ENCODE measurements at regions of chr3 and their contacts with region 1.

Region 1: DNA sequence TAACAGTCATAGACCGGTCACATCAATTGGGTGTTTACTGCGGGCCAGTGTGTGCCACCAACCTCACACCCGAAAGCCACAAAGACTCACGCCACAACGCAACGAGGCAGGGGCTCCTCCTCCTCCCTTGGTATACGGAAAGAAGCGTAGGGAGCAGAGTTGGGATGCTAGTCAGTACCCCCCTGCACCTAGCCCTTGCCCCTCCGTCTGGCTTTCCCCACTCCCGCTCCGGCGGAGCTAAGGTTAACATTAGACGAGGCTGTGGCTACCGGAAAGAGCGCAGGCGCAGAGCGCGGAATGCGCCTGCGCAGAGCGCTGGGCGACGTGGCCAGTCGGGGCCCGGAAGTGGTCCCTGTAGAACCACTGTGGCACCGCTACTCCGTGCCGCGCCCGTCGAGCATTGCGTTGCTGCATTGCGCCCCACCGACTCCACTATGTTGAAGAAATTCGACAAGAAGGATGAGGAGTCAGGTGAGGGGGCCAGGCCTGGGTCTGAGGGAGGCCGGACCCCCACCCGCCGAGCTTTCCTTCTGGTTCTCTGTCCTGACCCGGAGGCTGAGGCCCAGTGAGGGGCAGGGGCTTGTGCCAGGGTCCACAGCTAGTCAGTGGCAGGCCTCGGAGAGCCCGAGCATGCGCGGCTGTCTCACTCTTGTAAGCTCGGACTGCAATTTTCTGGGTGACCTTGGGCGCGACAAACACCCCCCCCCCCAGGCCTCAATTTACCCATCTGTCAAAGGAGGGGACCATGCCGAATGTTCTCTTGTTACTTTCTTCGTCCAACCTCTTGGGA is at the start of gene COPG1:
- DNase-seq: peak; percentile 72
- ATAC-seq: peak; percentile 92
- H3K4me3 ChIP-seq: peak within 1 kb of the TSS; percentile 84
- H3K27ac ChIP-seq: peak within 1 kb of the TSS; percentile 94
- H3K4me1 ChIP-seq: peaks cover 8% of the 10 kb centered on the region
- H3K27me3 ChIP-seq: no peaks in the 10 kb centered on the region
- CTCF ChIP-seq: no peak
- EP300 ChIP-seq: no peak
- POLR2A ChIP-seq: peak; percentile 98
- RAD21 ChIP-seq: no peak
- polyA plus RNA-seq, gene COPG1: 54.8 to 102 TPM

Region 2: DNA sequence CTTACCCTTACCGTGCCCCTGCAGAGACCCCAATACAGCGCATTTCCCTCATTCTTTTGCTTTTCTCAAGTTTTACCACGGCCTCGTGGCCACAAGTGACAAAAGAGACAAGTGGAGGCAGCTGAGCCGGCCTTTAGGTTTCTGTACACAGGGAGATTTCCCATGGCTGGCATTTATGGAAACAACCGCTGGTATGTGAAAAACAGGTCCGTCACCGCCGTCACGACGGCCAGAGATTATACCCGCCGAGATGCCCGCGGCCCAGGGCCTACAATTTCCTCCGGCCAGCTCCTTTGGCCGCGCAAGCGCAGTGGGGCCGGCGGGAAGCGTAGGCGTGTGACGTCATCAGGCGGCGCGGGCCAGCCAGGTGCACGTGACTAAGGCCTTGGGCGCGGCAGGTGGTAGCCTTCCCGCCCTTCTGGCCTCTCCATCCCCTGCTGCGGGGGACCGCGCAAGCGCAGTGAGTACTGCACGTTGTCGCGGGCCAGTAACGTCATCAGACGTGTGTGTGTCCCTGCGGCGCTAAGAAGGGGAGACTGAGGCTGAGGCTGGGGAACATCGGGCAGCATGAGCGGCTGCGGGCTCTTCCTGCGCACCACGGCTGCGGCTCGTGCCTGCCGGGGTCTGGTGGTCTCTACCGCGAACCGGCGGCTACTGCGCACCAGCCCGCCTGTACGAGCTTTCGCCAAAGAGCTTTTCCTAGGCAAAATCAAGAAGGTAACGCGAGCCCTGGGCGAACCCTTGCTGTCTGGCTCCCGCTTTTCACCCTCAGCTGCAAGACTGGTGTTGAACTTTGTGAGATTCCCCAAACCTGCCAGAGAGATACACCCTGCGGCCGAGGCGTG is 370.1 kb before region 1 on chr3 and contains the start of gene ACAD9:
- CTCF ChIA-PET with region 1: interaction called, 6 read pairs
- POLR2A ChIA-PET with region 1: interaction called, 3 read pairs
- RAD21 ChIA-PET with region 1: interaction called, 3 read pairs
- SMC1A ChIA-PET with region 1: no interaction called
- in situ Hi-C with region 1: no loop called
- intact Hi-C with region 1: loop called (anchors 5 kb)
- DNase-seq: peak; percentile 97
- ATAC-seq: peak; percentile 92
- H3K4me3 ChIP-seq: peak within 1 kb of the TSS; percentile 92
- H3K27ac ChIP-seq: peak within 1 kb of the TSS; percentile 85
- H3K4me1 ChIP-seq: peaks cover 18% of the 10 kb centered on the region
- H3K27me3 ChIP-seq: no peaks in the 10 kb centered on the region
- CTCF ChIP-seq: no peak
- EP300 ChIP-seq: peak; percentile 48 to 53; a peak in 1 of 4 replicates
- POLR2A ChIP-seq: peak; percentile 96
- RAD21 ChIP-seq: no peak
- polyA plus RNA-seq, gene ACAD9: 12.7 to 21.5 TPM

Region 3: GRCh38 chr3:129052675-129053074 is 196.8 kb before region 1 on chr3:
- CTCF ChIA-PET with region 1: interaction called, 220 read pairs
- POLR2A ChIA-PET with region 1: interaction called, 8 read pairs
- RAD21 ChIA-PET with region 1: interaction called, 88 read pairs
- SMC1A ChIA-PET with region 1: interaction called, 118 read pairs
- in situ Hi-C with region 1: loop called (anchors 5 kb)
- intact Hi-C with region 1: loop called (anchors 1 kb)
- DNase-seq: no peak
- ATAC-seq: no peak
- H3K4me3 ChIP-seq: no peak overlapping the region
- H3K27ac ChIP-seq: no peak overlapping the region
- H3K4me1 ChIP-seq: no peaks in the 10 kb centered on the region
- H3K27me3 ChIP-seq: no peaks in the 10 kb centered on the region; a peak in 1 of 4 replicates
- CTCF ChIP-seq: no peak
- EP300 ChIP-seq: no peak
- POLR2A ChIP-seq: no peak
- RAD21 ChIP-seq: no peak

Region 4: GRCh38 chr3:129176051-129176450 is 73.4 kb before region 1 on chr3:
- CTCF ChIA-PET with region 1: interaction called, 6 read pairs
- POLR2A ChIA-PET with region 1: interaction called, 5 read pairs
- RAD21 ChIA-PET with region 1: interaction called, 3 read pairs
- SMC1A ChIA-PET with region 1: no interaction called
- in situ Hi-C with region 1: no loop called
- intact Hi-C with region 1: loop called (anchors 5 kb)
- DNase-seq: no peak
- ATAC-seq: no peak
- H3K4me3 ChIP-seq: no peak overlapping the region
- H3K27ac ChIP-seq: no peak overlapping the region
- H3K4me1 ChIP-seq: peaks cover 9% of the 10 kb centered on the region
- H3K27me3 ChIP-seq: no peaks in the 10 kb centered on the region
- CTCF ChIP-seq: no peak
- EP300 ChIP-seq: no peak
- POLR2A ChIP-seq: no peak
- RAD21 ChIP-seq: no peak

Region 5: GRCh38 chr3:129233538-129233937 is 15.9 kb before region 1 on chr3:
- CTCF ChIA-PET with region 1: interaction called, 14 read pairs
- POLR2A ChIA-PET with region 1: interaction called, 4 read pairs
- RAD21 ChIA-PET with region 1: interaction called, 9 read pairs
- SMC1A ChIA-PET with region 1: interaction called, 8 read pairs
- in situ Hi-C with region 1: no loop called
- intact Hi-C with region 1: no loop called
- DNase-seq: peak; percentile 91
- ATAC-seq: peak; percentile 97
- H3K4me3 ChIP-seq: no peak overlapping the region
- H3K27ac ChIP-seq: no peak overlapping the region
- H3K4me1 ChIP-seq: peaks cover 7% of the 10 kb centered on the region
- H3K27me3 ChIP-seq: no peaks in the 10 kb centered on the region
- CTCF ChIP-seq: no peak
- EP300 ChIP-seq: peak in 1 of 2 experiments; percentile 52; a peak in 1 of 4 replicates
- POLR2A ChIP-seq: no peak
- RAD21 ChIP-seq: no peak

Region 6: GRCh38 chr3:129316131-129317013 is 66.9 kb after region 1 on chr3:
- CTCF ChIA-PET with region 1: interaction called, 43 read pairs
- POLR2A ChIA-PET with region 1: interaction called, 29 read pairs
- RAD21 ChIA-PET with region 1: interaction called, 31 read pairs
- SMC1A ChIA-PET with region 1: interaction called, 16 read pairs
- in situ Hi-C with region 1: no loop called
- intact Hi-C with region 1: loop called (anchors 2 kb)
- DNase-seq: no peak
- ATAC-seq: peak; percentile 56
- H3K4me3 ChIP-seq: peak overlapping the region; percentile 88
- H3K27ac ChIP-seq: peak overlapping the region; percentile 41; the same call in 1 of the 2 replicates
- H3K4me1 ChIP-seq: peaks cover 16% of the 10 kb centered on the region
- H3K27me3 ChIP-seq: peaks cover 0 to 3% of the 10 kb centered on the region in 2 experiments; a peak in 2 of 4 replicates
- CTCF ChIP-seq: peak; percentile 61 to 76 (median 71)
- EP300 ChIP-seq: peak in 1 of 2 experiments; percentile 22; a peak in 1 of 4 replicates
- POLR2A ChIP-seq: peak; percentile 87
- RAD21 ChIP-seq: peak; percentile 52

Region 7: DNA sequence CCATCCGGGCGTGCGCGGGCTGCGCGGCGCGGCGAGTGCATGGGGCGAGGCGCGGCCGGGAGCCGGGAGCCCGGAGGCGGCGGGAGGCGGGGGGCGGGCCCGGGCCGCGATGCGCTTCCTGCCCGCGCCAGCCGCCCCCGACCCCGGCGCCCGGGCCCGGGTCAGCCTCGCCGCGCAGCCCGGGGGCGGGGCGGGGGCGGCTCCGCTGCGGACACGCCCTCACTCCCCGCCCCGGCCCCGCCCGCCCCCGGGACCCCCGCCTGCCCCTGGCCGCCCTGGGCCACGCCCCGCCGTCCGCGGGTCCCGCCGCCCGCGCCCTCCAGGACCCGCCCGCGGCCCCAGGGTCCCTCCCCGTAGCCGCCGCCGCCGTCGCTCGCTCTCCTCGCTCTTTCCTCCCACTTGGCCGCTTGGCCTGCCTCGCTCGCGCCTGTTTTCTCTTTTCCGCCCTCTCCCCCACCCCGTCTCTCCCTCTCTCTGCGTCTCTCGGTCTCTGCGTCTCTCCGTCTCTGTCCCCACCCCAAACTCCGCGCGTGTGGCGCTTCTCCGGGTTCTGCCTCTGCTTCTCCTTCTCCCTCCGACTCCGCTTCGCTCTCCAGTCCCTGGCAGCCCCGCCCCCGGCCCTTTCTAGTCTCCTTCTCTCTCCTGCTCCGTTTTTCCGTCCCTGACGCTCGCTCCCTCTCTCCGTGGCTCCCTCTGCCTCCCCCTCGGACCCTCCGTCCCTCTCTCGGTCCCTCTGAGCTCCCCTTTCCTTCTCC is 357.3 kb after region 1 on chr3 and contains the start of gene PLXND1:
- CTCF ChIA-PET with region 1: no interaction called
- POLR2A ChIA-PET with region 1: no interaction called
- RAD21 ChIA-PET with region 1: no interaction called
- SMC1A ChIA-PET with region 1: no interaction called
- in situ Hi-C with region 1: no loop called
- intact Hi-C with region 1: no loop called
- DNase-seq: no peak
- ATAC-seq: peak; percentile 47
- H3K4me3 ChIP-seq: peak within 1 kb of the TSS; percentile 44; the same call in 1 of the 2 replicates
- H3K27ac ChIP-seq: no peak within 1 kb of the TSS
- H3K4me1 ChIP-seq: no peaks in the 10 kb centered on the region
- H3K27me3 ChIP-seq: peaks cover 8 to 12% of the 10 kb centered on the region in 2 experiments; a peak in 3 of 4 replicates
- CTCF ChIP-seq: no peak
- EP300 ChIP-seq: no peak
- POLR2A ChIP-seq: no peak
- RAD21 ChIP-seq: no peak
- polyA plus RNA-seq, gene PLXND1: not detected

Measured in GM12878 (cell line).